Ovary (tissue), 10 donors: ENCODE measurements at regions of chr6 and their contacts with region 1.

Region 1: GRCh38 chr6:142845624-142846458 is 99.1 kb downstream of the HIVEP2 start:
- DNase-seq: peak; percentile 81 to 92 (median 88)
- H3K4me3 ChIP-seq: peak overlapping the region; percentile 10
- H3K27ac ChIP-seq: peak overlapping the region; percentile 28
- H3K4me1 ChIP-seq: peaks cover 13% of the 10 kb centered on the region
- H3K27me3 ChIP-seq: no peaks in the 10 kb centered on the region
- CTCF ChIP-seq: peak in 1 of 3 donors; percentile 10
- EP300 ChIP-seq: no peak
- POLR2A ChIP-seq: no peak

Region 2: DNA sequence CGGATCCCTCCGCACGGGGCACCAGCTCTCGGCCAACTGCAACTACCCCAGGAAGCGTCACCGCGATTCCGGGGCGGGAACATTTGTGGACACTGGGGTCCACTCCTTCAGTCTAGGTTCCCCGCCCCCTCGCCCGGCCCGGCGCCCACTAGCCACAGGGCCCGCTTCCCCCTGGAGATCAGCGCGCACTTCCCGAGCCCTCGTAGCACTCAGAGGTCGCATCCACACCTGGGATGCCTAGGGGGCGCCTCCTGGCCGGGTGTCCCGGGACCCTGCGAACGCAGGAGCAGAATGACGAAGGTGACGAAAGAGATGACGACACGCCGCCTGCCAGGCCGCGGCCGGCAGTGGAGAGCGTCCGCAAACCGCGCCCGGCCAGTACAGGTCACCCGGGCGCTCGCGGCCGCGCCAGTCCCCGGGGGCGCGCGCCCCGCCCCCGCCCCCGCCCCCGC is 214.5 kb after region 1 on chr6:
- intact Hi-C with region 1: loop called in 1 of 4 experiments (anchors 5 kb)
- DNase-seq: peak; percentile 77 to 88 (median 87)
- H3K4me3 ChIP-seq: peak overlapping the region; percentile 76
- H3K27ac ChIP-seq: peak overlapping the region; percentile 67 to 83
- H3K4me1 ChIP-seq: peaks cover 3% of the 10 kb centered on the region
- H3K27me3 ChIP-seq: no peaks in the 10 kb centered on the region
- CTCF ChIP-seq: peak in 1 of 3 donors; percentile 38
- EP300 ChIP-seq: no peak
- POLR2A ChIP-seq: peak; percentile 69